CD8-positive, alpha-beta memory T cell (primary cell): ENCODE measurements at regions of chr12 and their contacts with region 1.

Region 1: DNA sequence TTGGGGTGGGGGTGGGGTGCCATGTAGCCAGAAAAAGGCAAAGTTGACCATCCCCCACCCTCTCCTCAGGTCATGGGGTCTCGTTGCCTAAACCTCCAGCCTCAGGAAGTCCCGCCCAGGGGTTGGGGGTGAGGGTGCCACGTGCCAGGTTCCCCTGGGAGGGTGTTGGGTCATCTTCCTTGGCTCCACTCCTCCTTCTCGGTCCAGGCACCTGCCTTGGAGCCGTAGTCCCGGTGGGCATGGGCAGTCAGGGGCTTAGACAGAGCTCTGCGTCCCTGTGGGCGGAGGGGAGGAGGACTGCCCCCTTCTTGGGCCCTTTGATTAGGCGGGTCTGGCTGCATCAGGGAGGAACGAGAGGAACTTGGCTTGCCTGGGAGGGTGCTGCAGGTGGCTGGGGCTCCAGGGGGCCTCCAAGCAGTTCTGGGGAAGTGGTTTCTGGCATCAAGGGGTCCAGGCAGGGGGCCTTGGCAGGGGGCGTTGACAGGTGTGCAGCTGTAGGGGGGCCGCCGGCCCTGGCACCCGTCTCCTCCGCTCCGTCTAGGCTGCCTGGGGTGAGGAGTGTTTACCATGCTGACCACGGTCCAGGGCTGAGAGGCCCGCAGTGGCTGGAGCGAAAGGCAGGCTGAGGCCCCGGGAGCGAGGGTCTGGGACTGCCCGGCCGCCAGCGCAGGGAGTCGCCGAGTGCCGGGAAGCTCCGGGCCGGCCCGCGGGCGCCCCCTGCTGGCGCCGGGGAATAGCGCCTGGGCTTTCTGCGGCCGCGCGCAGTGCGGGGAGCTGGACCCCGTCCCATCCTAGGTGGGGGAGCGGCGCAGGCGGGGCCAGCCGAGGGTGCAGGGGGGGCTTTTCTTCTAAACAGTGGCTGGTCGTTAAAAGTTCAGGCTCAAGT is 7.9 kb downstream of the SETD1B start:
- DNase-seq: peak; percentile 68 to 77 (median 69)
- H3K4me3 ChIP-seq: peak overlapping the region; percentile 74
- H3K4me3 Mint-ChIP-seq: peak overlapping the region; percentile 80 to 91 (median 84)
- H3K27ac ChIP-seq: peak overlapping the region; percentile 17
- H3K27ac Mint-ChIP-seq: peak overlapping the region; percentile 50 to 92 (median 78)
- H3K4me1 ChIP-seq: peaks cover 48% of the 10 kb centered on the region
- H3K4me1 Mint-ChIP-seq: peaks cover 42 to 75% (median 56%) of the 10 kb centered on the region in 3 donors
- H3K27me3 ChIP-seq: no peaks in the 10 kb centered on the region
- H3K27me3 Mint-ChIP-seq: peaks cover 0 to 2% of the 10 kb centered on the region in 2 donors

Region 2: GRCh38 chr12:121209624-121210572 is 601.8 kb before region 1 on chr12 and contains the start of gene P2RX4:
- CTCF ChIA-PET with region 1: no interaction called
- POLR2A ChIA-PET with region 1: no interaction called
- DNase-seq: peak; percentile 79 to 92 (median 89)
- H3K4me3 ChIP-seq: peak within 1 kb of the TSS; percentile 65
- H3K4me3 Mint-ChIP-seq: peak within 1 kb of the TSS; percentile 82 to 97 (median 91)
- H3K27ac ChIP-seq: peak within 1 kb of the TSS; percentile 90
- H3K27ac Mint-ChIP-seq: peak within 1 kb of the TSS; percentile 90 to 99 (median 96)
- H3K4me1 ChIP-seq: peaks cover 16% of the 10 kb centered on the region
- H3K4me1 Mint-ChIP-seq: peaks cover 22 to 41% (median 22%) of the 10 kb centered on the region in 3 donors
- H3K27me3 ChIP-seq: no peaks in the 10 kb centered on the region
- H3K27me3 Mint-ChIP-seq: no peaks in the 10 kb centered on the region
- total RNA-seq, gene P2RX4: 39.2 to 40.3 TPM

Region 3: DNA sequence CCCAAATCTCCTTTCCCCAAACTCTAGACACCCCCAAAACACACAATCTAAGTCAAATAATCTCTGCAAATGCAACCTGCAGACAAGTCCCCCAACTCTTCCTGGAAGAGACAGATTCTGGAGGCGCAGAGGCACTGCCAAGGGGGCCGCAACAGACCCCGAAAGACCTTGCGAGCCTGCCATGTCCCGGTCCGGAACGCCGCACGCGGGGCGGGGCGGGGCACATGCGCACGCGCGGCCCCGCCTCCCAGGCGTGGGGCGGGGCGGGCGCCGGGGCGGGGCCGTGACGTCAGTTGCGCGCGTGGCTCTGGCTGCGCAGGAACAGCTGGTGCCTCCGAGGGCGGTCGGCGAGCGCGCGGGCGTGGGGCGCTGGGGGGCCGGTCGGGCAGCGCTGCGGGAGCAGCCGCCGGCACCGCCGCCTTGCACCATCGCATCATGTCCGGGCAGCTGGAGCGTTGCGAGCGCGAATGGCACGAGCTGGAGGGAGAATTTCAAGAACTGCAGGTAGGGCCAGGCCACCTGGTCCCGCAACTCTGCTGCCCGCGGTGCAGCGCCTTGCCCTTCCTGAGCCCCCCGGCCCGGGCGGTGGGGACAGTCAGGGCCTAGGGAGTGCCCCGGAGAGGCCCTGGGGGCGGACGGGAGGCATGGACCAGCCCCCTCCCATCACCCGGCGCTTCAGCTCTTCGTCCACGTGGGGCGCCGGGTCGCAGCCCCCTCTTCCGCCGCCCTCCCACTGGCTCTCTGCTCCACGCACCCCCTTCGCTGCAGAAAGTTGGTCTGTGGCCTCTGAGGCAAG is 99.0 kb before region 1 on chr12 and contains the start of gene TMEM120B:
- CTCF ChIA-PET with region 1: interaction called, 10 read pairs
- POLR2A ChIA-PET with region 1: interaction called, 4 read pairs
- DNase-seq: peak; percentile 75 to 91 (median 86)
- H3K4me3 ChIP-seq: peak within 1 kb of the TSS; percentile 89
- H3K4me3 Mint-ChIP-seq: peak within 1 kb of the TSS; percentile 92 to 99 (median 95)
- H3K27ac ChIP-seq: peak within 1 kb of the TSS; percentile 70
- H3K27ac Mint-ChIP-seq: peak within 1 kb of the TSS; percentile 86 to 99 (median 92)
- H3K4me1 ChIP-seq: peaks cover 17% of the 10 kb centered on the region
- H3K4me1 Mint-ChIP-seq: peaks cover 14 to 26% (median 18%) of the 10 kb centered on the region in 3 donors
- H3K27me3 ChIP-seq: no peaks in the 10 kb centered on the region
- H3K27me3 Mint-ChIP-seq: peaks cover 0 to 2% of the 10 kb centered on the region in 2 donors
- total RNA-seq, gene TMEM120B: 12.5 to 15.2 TPM

Region 4: DNA sequence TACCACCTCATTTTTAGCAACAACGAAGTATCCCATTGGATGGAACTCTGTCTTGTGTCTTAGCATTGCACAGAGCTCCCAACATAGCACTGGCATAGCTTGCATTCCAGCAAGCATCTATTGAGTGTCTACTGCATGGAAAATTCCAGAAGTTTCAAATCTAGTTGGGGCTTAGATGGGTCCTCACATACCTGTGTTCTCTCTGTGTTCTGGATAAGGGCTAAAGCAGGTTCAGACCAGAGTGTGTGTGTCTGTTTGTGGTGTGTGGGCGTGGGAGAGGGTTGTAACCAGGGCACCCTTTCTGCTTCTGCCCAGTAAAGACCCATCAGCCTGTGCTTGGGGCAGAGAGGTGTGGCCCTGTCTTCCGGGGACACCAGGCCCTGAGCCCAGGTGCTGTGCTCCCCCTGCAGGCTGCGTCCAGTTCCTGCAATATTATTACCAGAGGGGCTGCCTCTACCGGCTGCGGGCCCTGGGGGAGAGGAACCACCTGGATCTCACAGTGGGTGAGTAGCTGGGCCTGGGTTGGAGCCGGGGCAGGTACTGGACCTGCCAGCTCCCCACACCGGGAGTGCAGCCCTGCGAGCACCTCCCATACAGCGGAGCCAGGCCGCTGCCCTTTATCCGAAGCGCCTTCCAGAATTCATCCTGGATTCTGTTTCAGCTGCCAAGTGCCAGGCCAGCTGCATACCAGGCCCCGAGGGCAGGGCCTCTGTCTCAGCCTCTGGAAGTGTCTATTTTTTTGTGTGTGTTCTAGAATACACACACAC is 38.5 kb before region 1 on chr12:
- CTCF ChIA-PET with region 1: interaction called, 1,908 read pairs
- POLR2A ChIA-PET with region 1: interaction called, 10 read pairs
- DNase-seq: peak; percentile 70 to 86 (median 76)
- H3K4me3 ChIP-seq: no peak overlapping the region
- H3K4me3 Mint-ChIP-seq: no peak overlapping the region
- H3K27ac ChIP-seq: no peak overlapping the region
- H3K27ac Mint-ChIP-seq: peak overlapping the region; percentile 15 to 94 (median 60)
- H3K4me1 ChIP-seq: peaks cover 23% of the 10 kb centered on the region
- H3K4me1 Mint-ChIP-seq: peaks cover 10 to 23% (median 11%) of the 10 kb centered on the region in 3 donors
- H3K27me3 ChIP-seq: no peaks in the 10 kb centered on the region
- H3K27me3 Mint-ChIP-seq: no peaks in the 10 kb centered on the region

Region 5: DNA sequence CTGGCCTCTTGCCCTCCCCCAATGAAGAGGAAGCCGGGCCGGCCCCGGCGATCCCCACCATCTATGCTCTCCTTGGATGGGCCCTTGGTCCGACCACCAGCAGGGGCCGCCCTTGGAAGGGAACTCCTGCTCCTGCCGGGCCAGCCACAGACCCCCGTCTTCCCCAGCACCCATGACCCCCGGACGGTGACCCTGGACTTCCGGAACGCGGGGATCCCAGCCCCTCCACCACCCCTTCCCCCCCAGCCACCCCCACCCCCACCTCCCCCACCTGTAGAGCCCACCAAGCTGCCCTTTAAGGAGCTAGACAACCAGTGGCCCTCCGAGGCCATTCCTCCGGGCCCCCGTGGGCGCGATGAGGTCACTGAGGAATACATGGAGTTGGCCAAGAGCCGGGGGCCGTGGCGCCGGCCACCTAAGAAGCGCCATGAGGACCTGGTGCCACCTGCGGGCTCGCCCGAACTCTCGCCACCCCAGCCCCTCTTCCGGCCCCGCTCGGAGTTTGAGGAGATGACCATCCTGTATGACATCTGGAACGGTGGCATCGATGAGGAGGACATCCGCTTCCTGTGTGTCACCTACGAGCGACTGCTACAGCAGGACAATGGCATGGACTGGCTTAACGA is 11.5 kb after region 1 on chr12:
- CTCF ChIA-PET with region 1: interaction called, 14 read pairs
- POLR2A ChIA-PET with region 1: interaction called, 5 read pairs
- DNase-seq: peak in 1 of 5 donors; percentile 2
- H3K4me3 ChIP-seq: no peak overlapping the region
- H3K4me3 Mint-ChIP-seq: no peak overlapping the region
- H3K27ac ChIP-seq: no peak overlapping the region
- H3K27ac Mint-ChIP-seq: no peak overlapping the region
- H3K4me1 ChIP-seq: no peaks in the 10 kb centered on the region
- H3K4me1 Mint-ChIP-seq: peaks cover 0 to 8% (median 3%) of the 10 kb centered on the region in 3 donors
- H3K27me3 ChIP-seq: no peaks in the 10 kb centered on the region
- H3K27me3 Mint-ChIP-seq: no peaks in the 10 kb centered on the region

Region 6: GRCh38 chr12:121839106-121839992 is 27.7 kb after region 1 on chr12:
- CTCF ChIA-PET with region 1: interaction called, 16 read pairs
- POLR2A ChIA-PET with region 1: interaction called, 3 read pairs
- DNase-seq: peak; percentile 99 to 100 (median 99)
- H3K4me3 ChIP-seq: peak overlapping the region; percentile 82
- H3K4me3 Mint-ChIP-seq: peak overlapping the region; percentile 85 to 100 (median 98)
- H3K27ac ChIP-seq: peak overlapping the region; percentile 68
- H3K27ac Mint-ChIP-seq: peak overlapping the region in 7 of 8 donors; percentile 81 to 95 (median 90)
- H3K4me1 ChIP-seq: peaks cover 8% of the 10 kb centered on the region
- H3K4me1 Mint-ChIP-seq: peaks cover 15 to 18% (median 15%) of the 10 kb centered on the region in 3 donors
- H3K27me3 ChIP-seq: no peaks in the 10 kb centered on the region
- H3K27me3 Mint-ChIP-seq: no peaks in the 10 kb centered on the region

Region 7: GRCh38 chr12:121888478-121889266 is 77.0 kb after region 1 on chr12 and contains the start of gene PSMD9:
- CTCF ChIA-PET with region 1: interaction called, 22 read pairs
- POLR2A ChIA-PET with region 1: interaction called, 5 read pairs
- DNase-seq: peak; percentile 97 to 98 (median 98)
- H3K4me3 ChIP-seq: peak within 1 kb of the TSS; percentile 74
- H3K4me3 Mint-ChIP-seq: peak within 1 kb of the TSS; percentile 92 to 99 (median 99)
- H3K27ac ChIP-seq: peak within 1 kb of the TSS; percentile 88
- H3K27ac Mint-ChIP-seq: peak within 1 kb of the TSS; percentile 93 to 99 (median 99)
- H3K4me1 ChIP-seq: peaks cover 22% of the 10 kb centered on the region
- H3K4me1 Mint-ChIP-seq: peaks cover 28 to 51% (median 48%) of the 10 kb centered on the region in 3 donors
- H3K27me3 ChIP-seq: no peaks in the 10 kb centered on the region
- H3K27me3 Mint-ChIP-seq: peaks cover 0 to 3% of the 10 kb centered on the region in 2 donors
- total RNA-seq, gene PSMD9: 83.7 to 89.9 TPM